ENCODE measurements at regions of chr10 and their contacts with region 1.

Region 1: DNA sequence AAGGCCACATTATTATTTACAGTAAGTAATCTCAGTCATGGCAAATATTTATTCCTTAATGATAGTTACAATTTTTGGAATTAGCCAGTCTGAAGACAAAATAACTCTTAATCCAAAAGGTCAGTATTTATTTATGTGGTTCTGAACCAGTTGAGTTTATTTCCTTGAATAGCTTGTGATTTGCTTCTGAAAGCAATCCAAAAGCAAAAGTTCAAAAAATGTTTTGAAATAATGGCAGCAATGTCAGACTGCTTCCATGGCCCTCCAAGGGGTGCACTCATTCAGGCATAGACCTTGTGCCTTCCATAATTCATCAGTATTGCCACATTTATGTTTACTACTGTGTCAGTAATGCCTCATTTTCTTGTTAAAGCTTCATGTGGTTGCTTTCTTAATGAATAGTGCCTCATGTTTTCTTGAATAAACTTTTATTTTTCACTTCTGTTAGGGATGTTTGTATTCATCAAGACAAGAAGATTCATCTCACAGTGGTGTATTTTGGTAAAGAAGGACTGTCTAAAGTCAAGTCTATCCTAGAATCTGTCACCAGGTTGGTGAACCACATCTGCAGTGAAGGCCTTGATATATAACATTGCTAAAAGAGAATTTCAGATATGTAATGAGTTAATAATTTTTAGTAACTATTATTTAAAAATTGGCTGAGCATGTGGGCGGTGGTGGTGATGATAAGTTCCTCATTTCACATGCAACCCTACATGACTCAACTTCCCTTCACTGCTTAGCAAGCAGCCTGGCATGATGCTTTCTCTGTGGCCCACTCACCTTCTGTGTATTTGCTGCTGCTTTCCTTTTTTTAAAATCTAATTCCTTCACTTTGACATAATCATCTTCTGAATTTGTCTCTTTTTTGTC is 22.0 kb downstream of the CSGALNACT2 start:
- DNase-seq: peak; percentile 66
- H3K4me3 Mint-ChIP-seq: peak overlapping the region; percentile 20
- H3K27ac Mint-ChIP-seq: peak overlapping the region; percentile 89
- H3K4me1 Mint-ChIP-seq: peaks cover 60% of the 10 kb centered on the region
- H3K27me3 Mint-ChIP-seq: no peaks in the 10 kb centered on the region

Region 2: GRCh38 chr10:43120929-43121314 is 39.4 kb before region 1 on chr10:
- CTCF ChIA-PET with region 1: no interaction called
- POLR2A ChIA-PET with region 1: interaction called, 5 read pairs
- intact Hi-C with region 1: loop called (anchors 1 kb)
- DNase-seq: peak; percentile 89
- H3K4me3 Mint-ChIP-seq: no peak overlapping the region
- H3K27ac Mint-ChIP-seq: peak overlapping the region; percentile 75
- H3K4me1 Mint-ChIP-seq: peaks cover 21% of the 10 kb centered on the region
- H3K27me3 Mint-ChIP-seq: no peaks in the 10 kb centered on the region

Region 3: GRCh38 chr10:43323245-43323644 is 163.0 kb after region 1 on chr10:
- CTCF ChIA-PET with region 1: no interaction called
- POLR2A ChIA-PET with region 1: no interaction called
- intact Hi-C with region 1: no loop called
- DNase-seq: no peak
- H3K4me3 Mint-ChIP-seq: peak overlapping the region; percentile 45
- H3K27ac Mint-ChIP-seq: no peak overlapping the region
- H3K4me1 Mint-ChIP-seq: peaks cover 10% of the 10 kb centered on the region
- H3K27me3 Mint-ChIP-seq: no peaks in the 10 kb centered on the region

Region 4: DNA sequence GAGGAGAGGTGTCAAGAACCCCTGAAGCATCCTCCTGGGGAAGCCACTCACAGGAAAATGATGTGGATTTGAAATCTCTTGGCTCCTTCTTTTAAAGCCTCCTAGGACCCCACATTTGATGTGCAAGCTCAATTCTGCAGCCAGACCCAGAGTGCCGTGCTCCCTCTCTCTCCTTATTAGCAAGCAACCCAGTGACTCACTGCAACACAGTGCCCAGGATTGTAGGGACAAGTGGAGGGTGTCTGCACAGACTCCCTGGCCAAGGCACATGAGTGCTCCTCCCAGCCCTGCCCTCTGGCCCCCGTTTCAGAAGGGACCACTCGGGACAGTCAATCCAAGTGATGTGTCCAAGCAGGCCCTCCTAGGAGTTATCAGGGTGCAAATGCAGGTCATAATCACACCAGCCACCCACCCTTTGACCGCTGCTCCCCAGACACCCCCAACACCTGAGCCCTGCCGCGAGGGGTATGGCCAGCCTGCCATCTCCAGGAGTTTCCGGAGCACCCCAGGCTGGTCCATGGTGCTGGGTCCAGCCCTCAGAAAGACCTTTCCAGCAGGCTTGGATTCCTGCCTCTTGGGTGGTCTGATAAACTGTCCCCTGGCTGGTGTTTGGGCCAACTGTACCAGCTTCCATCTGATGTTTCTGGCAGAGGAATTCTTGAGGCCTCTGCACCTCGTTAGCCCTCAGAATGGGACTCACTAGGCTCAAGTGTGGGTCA is 1279.1 kb after region 1 on chr10:
- CTCF ChIA-PET with region 1: no interaction called
- POLR2A ChIA-PET with region 1: no interaction called
- intact Hi-C with region 1: no loop called
- DNase-seq: no peak
- H3K4me3 Mint-ChIP-seq: no peak overlapping the region
- H3K27ac Mint-ChIP-seq: no peak overlapping the region
- H3K4me1 Mint-ChIP-seq: no peaks in the 10 kb centered on the region
- H3K27me3 Mint-ChIP-seq: peaks cover 7% of the 10 kb centered on the region

Region 5: DNA sequence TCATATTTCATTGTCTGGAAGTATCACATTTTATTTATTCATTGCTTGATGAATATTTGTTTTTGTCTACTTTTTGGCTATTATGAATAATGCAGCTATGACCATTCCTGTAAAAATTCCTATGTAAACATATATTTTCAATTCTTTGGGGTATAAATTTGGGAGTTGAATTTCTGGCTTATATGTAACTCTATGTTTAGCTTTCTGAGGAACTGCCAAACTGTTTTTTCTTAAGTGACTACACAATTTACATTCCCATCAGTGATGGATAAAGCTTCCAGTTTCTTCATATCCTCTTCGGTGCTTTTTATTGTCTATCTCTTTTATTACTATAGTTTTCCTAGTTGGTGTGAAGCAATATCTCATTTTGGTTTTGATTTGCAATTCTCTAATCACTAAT is 1340.2 kb after region 1 on chr10:
- CTCF ChIA-PET with region 1: no interaction called
- POLR2A ChIA-PET with region 1: no interaction called
- intact Hi-C with region 1: no loop called
- DNase-seq: no peak
- H3K4me3 Mint-ChIP-seq: no peak overlapping the region
- H3K27ac Mint-ChIP-seq: no peak overlapping the region
- H3K4me1 Mint-ChIP-seq: no peaks in the 10 kb centered on the region
- H3K27me3 Mint-ChIP-seq: no peaks in the 10 kb centered on the region

Measured in activated CD4-positive, alpha-beta memory T cell treated with anti-CD3 and anti-CD28 coated beads for 36 hours (primary cell).